ENCODE measurements at regions of chr22 and their contacts with region 1.

Region 1: GRCh38 chr22:31749636-31750364 is at the start of gene PRR14L:
- DNase-seq: peak; percentile 97
- H3K4me3 ChIP-seq: peak within 1 kb of the TSS; percentile 95
- H3K27ac ChIP-seq: peak within 1 kb of the TSS; percentile 90
- H3K4me1 ChIP-seq: peaks cover 43% of the 10 kb centered on the region
- CTCF ChIP-seq: peak; percentile 45; the same call in 1 of the 2 replicates
- total RNA-seq, gene PRR14L: 15.9 and 21.9 TPM in 2 replicates

Region 2: GRCh38 chr22:31119026-31119717 is 630.6 kb before region 1 on chr22:
- CTCF ChIA-PET with region 1: no interaction called
- POLR2A ChIA-PET with region 1: no interaction called
- intact Hi-C with region 1: no loop called
- DNase-seq: no peak
- H3K4me3 ChIP-seq: no peak overlapping the region
- H3K27ac ChIP-seq: no peak overlapping the region
- H3K4me1 ChIP-seq: no peaks in the 10 kb centered on the region
- CTCF ChIP-seq: no peak

Region 3: DNA sequence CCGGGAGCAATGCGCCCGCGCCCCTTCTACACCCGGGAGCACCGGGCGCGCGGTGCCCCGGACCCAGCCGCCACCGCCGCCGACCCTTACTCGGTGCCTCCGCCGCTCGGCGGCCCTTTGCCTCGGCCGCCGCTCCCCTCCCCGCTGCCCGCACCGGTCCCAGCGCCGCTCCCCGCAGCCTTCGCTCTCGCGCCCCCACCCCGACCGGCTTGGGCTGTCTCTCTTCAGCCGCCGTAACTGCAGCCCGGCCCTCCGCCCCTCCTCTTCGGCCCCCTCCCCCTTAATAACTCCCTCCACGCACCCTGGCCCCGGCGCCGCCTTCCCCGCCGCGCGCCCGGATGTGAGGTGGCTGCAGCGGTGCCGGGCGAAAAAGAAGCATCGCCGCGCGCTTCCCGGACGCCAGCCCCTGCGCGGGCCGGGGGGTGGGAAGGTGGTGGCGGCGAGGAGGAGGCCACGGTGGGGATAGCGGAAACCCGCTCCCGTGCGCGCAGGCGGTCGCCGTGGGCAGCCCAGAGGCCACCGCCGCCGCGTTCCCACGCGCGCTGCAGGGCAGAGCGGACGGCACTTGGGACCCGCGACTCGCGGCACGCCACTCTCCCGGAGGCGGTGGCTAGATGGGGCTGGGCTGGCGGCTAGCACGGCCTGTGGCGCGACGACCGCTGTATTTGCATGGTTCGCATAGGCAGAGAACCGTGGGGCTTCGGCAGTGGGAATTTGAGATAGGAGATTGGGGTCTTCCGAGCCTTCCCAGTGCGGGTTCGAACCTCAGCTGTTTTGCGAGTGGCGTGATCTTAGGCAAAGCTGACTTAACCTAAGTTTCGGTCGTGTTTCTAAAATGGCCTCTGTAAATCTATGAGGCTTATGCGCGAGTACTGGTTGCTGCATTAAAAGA is 259.9 kb before region 1 on chr22 and contains the start of gene EIF4ENIF1:
- CTCF ChIA-PET with region 1: no interaction called
- POLR2A ChIA-PET with region 1: no interaction called
- intact Hi-C with region 1: loop called (anchors 5 kb)
- DNase-seq: peak; percentile 87
- H3K4me3 ChIP-seq: peak within 1 kb of the TSS; percentile 79
- H3K27ac ChIP-seq: peak within 1 kb of the TSS; percentile 97
- H3K4me1 ChIP-seq: peaks cover 50% of the 10 kb centered on the region
- CTCF ChIP-seq: no peak
- total RNA-seq, gene EIF4ENIF1: 12.5 and 18.1 TPM in 2 replicates

Region 4: DNA sequence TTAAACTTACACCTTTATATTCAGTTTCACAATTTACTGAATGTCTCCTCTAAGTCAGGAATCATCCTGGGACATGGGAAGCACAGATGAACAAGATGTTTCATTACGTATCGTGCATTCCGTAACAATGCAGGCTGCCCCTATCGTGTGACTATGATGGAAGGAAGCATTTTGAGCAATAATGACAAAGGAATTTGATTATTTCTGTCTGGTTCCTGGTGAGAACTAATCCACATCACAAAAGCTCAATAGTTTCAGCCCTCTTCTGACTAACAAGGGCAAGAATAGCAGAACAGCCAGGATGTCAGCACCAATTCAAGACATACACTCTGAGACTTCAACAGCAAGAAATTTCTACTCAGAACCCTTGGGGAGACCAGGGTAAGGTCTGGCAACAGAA is 102.3 kb before region 1 on chr22:
- CTCF ChIA-PET with region 1: no interaction called
- POLR2A ChIA-PET with region 1: no interaction called
- intact Hi-C with region 1: no loop called
- DNase-seq: no peak
- H3K4me3 ChIP-seq: no peak overlapping the region
- H3K27ac ChIP-seq: no peak overlapping the region
- H3K4me1 ChIP-seq: peaks cover 17% of the 10 kb centered on the region
- CTCF ChIP-seq: no peak

Region 5: DNA sequence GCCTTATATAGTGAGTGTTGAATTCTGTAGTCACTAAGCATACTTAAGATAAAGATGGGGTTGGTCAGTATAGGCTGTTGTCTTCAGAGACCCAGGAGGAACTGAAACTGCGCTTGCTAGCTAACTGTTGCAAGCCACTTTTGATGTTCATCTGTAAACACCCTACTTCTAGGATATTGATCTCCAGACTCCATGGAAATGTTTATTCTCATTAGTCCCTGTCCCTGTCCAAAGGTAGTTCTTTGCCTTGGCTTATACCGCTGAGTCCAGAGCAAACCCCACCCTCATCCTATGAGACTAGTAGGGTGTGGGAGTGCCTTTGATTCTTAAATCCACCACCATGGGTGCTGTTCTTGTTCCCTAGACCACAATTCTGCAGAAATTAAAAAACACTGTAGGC is 40.4 kb after region 1 on chr22:
- CTCF ChIA-PET with region 1: no interaction called
- POLR2A ChIA-PET with region 1: interaction called, 4 read pairs
- intact Hi-C with region 1: loop called (anchors 5 kb)
- DNase-seq: peak; percentile 83
- H3K4me3 ChIP-seq: peak overlapping the region; percentile 11
- H3K27ac ChIP-seq: peak overlapping the region; percentile 80
- H3K4me1 ChIP-seq: peaks cover 33% of the 10 kb centered on the region
- CTCF ChIP-seq: 0 out of 2 replicates have a peak, but pooled peaks have one; percentile 17

Region 6: DNA sequence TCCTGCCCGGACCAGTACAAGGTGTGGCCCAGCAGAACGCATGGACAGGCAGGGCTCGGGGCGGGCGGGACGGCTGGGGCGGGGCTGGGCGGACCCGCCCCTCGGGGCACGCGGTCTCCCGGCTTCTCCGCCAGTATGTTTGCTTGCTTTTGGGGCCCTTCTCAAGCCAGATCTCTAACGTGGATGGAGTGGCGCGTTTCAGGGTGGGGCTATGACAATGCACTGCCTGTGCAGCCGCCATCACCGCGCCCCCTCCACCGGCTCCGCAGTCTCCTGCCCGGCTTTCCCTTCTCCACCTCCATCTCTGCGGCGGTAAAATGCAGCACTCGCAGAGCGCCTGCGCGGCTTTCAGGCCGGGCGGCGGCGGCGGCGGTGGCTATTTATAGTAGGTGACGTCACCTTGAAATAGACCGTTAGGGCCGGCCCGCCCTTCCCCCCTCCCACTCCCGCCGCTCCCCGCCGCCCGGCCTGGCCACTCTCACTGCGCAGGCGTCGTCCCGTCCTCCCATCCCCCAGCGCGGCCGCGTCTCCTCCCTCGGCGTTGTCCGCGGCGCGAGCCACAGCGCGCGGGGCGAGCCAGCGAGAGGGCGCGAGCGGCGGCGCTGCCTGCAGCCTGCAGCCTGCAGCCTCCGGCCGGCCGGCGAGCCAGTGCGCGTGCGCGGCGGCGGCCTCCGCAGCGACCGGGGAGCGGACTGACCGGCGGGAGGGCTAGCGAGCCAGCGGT is 194.3 kb after region 1 on chr22 and contains the start of gene YWHAH:
- CTCF ChIA-PET with region 1: no interaction called
- POLR2A ChIA-PET with region 1: interaction called, 5 read pairs
- intact Hi-C with region 1: loop called (anchors 2 kb)
- DNase-seq: peak; percentile 94
- H3K4me3 ChIP-seq: peak within 1 kb of the TSS; percentile 99
- H3K27ac ChIP-seq: peak within 1 kb of the TSS; percentile 87
- H3K4me1 ChIP-seq: peaks cover 37% of the 10 kb centered on the region
- CTCF ChIP-seq: no peak
- total RNA-seq, gene YWHAH: 103 and 113 TPM in 2 replicates

Measured in OCI-LY7 (cell line).